ENCODE measurements at regions of chr2 and their contacts with region 1.

Region 1: GRCh38 chr2:164430166-164430783 is 191.0 kb downstream of the GRB14 start:
- DNase-seq: no peak
- ATAC-seq: peak in 1 of 2 donors; percentile 47

Region 2: GRCh38 chr2:163182764-163183354 is 1247.4 kb before region 1 on chr2:
- intact Hi-C with region 1: loop called in 1 of 2 experiments (anchors 5 kb)
- DNase-seq: no peak
- ATAC-seq: no peak

Region 3: GRCh38 chr2:163191372-163191771 is 1238.9 kb before region 1 on chr2:
- intact Hi-C with region 1: loop called in 1 of 2 experiments (anchors 5 kb)
- DNase-seq: no peak
- ATAC-seq: no peak

Region 4: GRCh38 chr2:164388511-164388910 is 41.8 kb before region 1 on chr2:
- intact Hi-C with region 1: no loop called
- DNase-seq: no peak
- ATAC-seq: peak in 1 of 2 donors; percentile 72

Measured in left cardiac atrium (tissue), 4 donors.